IMR-90 (cell line): ENCODE measurements at regions of chr6 and their contacts with region 1.

Region 1: GRCh38 chr6:23446394-23447046 is 679.5 kb upstream of the NRSN1 start:
- DNase-seq: peak; percentile 76
- ATAC-seq: peak; percentile 94
- H3K4me3 ChIP-seq: no peak overlapping the region
- H3K27ac ChIP-seq: no peak overlapping the region
- H3K4me1 ChIP-seq: no peaks in the 10 kb centered on the region
- H3K27me3 ChIP-seq: no peaks in the 10 kb centered on the region
- CTCF ChIP-seq: peak; percentile 80
- POLR2A ChIP-seq: no peak
- RAD21 ChIP-seq: peak; percentile 89

Region 2: GRCh38 chr6:21946298-21946783 is 1500.2 kb before region 1 on chr6:
- CTCF ChIA-PET with region 1: no interaction called
- POLR2A ChIA-PET with region 1: no interaction called
- dilution Hi-C with region 1: no loop called
- in situ Hi-C with region 1: loop called (anchors 25 kb)
- intact Hi-C with region 1: loop called (anchors 10 kb)
- DNase-seq: peak; percentile 98
- ATAC-seq: peak; percentile 84
- H3K4me3 ChIP-seq: no peak overlapping the region
- H3K27ac ChIP-seq: peak overlapping the region; percentile 70
- H3K4me1 ChIP-seq: peaks cover 19% of the 10 kb centered on the region
- H3K27me3 ChIP-seq: no peaks in the 10 kb centered on the region
- CTCF ChIP-seq: no peak
- POLR2A ChIP-seq: peak; percentile 87
- RAD21 ChIP-seq: no peak

Region 3: DNA sequence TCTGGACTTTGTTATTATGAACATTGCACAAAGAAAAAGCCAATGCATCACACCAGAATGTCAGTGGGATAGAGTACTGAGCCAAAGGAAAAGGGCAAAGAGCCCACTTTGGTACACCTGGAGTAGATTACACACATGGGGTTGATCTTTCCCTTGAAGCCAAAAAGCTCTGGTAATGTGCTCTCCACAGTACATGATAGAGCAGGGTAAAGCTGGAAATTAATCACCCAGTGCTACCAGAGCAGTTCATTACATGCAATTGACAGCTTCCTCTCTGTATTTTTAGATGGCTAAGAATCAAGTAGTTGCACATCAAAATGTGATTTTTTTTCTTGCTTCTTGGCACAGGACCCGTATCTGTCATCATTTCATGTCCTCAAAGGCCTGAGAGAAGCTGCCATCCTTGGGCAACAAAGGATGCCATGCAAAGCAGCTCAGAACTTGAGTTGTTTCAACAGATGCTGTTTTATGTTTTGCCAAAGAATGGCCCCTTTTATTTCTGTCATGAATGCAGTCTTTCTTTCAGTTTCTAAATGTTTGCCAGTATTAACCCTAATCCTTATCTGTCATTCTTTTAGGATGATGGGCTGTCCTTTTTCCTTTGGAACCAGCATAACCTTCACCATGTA is 789.1 kb before region 1 on chr6:
- CTCF ChIA-PET with region 1: no interaction called
- POLR2A ChIA-PET with region 1: no interaction called
- dilution Hi-C with region 1: no loop called
- in situ Hi-C with region 1: no loop called
- intact Hi-C with region 1: loop called (anchors 10 kb)
- DNase-seq: no peak
- ATAC-seq: no peak
- H3K4me3 ChIP-seq: no peak overlapping the region
- H3K27ac ChIP-seq: no peak overlapping the region
- H3K4me1 ChIP-seq: peaks cover 2% of the 10 kb centered on the region
- H3K27me3 ChIP-seq: no peaks in the 10 kb centered on the region
- CTCF ChIP-seq: no peak
- POLR2A ChIP-seq: no peak
- RAD21 ChIP-seq: no peak

Region 4: DNA sequence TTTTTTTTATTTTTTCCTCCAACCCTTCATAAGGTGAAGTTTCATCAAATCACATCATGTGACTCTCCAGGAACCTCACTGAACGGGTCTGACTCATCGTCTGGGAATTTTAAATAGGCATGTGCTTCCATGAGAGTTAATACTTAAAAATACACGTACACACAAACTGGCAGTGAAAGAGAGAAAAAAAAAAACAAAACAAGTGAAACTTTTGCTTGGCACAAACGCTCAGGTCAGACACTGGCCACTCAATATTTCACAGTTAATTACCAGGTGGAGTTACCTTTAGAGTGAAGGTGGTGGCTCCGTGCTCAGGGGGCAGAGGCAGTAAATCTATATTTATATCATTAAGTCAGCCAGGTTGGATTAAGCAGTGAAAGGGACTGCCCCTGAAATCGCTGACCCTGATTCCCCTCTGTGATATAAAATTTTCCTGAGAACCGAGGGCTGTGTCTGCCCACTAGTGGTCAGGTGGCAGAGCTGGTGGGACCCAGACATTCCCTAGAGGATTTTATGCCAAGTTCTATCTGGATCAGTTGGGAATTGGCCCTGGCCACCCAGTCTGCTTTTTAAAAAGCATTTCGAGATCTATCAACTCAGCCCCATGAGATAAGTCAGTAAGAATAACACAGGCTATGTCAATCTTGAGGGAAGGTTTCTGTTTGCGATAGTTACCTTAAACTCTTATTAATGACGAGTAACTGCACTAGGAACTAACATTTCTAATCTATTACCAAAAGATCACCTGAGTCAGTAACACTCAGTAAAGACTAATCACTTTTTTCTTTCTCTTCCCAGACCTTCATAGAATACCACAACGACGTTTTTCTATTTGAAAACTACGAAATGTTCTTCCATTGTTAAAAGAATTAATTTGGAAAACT is 618.1 kb before region 1 on chr6:
- CTCF ChIA-PET with region 1: no interaction called
- POLR2A ChIA-PET with region 1: no interaction called
- dilution Hi-C with region 1: no loop called
- in situ Hi-C with region 1: no loop called
- intact Hi-C with region 1: loop called (anchors 10 kb)
- DNase-seq: peak; percentile 97
- ATAC-seq: peak; percentile 84
- H3K4me3 ChIP-seq: no peak overlapping the region
- H3K27ac ChIP-seq: peak overlapping the region; percentile 17; the same call in 1 of the 2 replicates
- H3K4me1 ChIP-seq: peaks cover 4% of the 10 kb centered on the region
- H3K27me3 ChIP-seq: no peaks in the 10 kb centered on the region
- CTCF ChIP-seq: peak; percentile 64
- POLR2A ChIP-seq: no peak
- RAD21 ChIP-seq: peak; percentile 65

Region 5: GRCh38 chr6:22954749-22955385 is 491.7 kb before region 1 on chr6:
- CTCF ChIA-PET with region 1: interaction called, 6 read pairs
- POLR2A ChIA-PET with region 1: no interaction called
- dilution Hi-C with region 1: no loop called
- in situ Hi-C with region 1: no loop called
- intact Hi-C with region 1: loop called (anchors 5 kb)
- DNase-seq: peak; percentile 49
- ATAC-seq: peak; percentile 78
- H3K4me3 ChIP-seq: peak overlapping the region; percentile 35
- H3K27ac ChIP-seq: peak overlapping the region; percentile 78; the same call in 1 of the 2 replicates
- H3K4me1 ChIP-seq: peaks cover 8% of the 10 kb centered on the region
- H3K27me3 ChIP-seq: no peaks in the 10 kb centered on the region
- CTCF ChIP-seq: no peak
- POLR2A ChIP-seq: no peak
- RAD21 ChIP-seq: no peak

Region 6: GRCh38 chr6:25156096-25156495 is 1709.6 kb after region 1 on chr6:
- CTCF ChIA-PET with region 1: no interaction called
- POLR2A ChIA-PET with region 1: no interaction called
- dilution Hi-C with region 1: no loop called
- in situ Hi-C with region 1: no loop called
- intact Hi-C with region 1: no loop called
- DNase-seq: peak; percentile 38
- ATAC-seq: peak; percentile 97
- H3K4me3 ChIP-seq: no peak overlapping the region
- H3K27ac ChIP-seq: no peak overlapping the region
- H3K4me1 ChIP-seq: peaks cover 8% of the 10 kb centered on the region
- H3K27me3 ChIP-seq: no peaks in the 10 kb centered on the region
- CTCF ChIP-seq: no peak
- POLR2A ChIP-seq: no peak
- RAD21 ChIP-seq: no peak